ENCODE measurements at regions of chr2 and their contacts with region 1.

Region 1: GRCh38 chr2:193847140-193847539 is 1652.4 kb upstream of the TMEFF2 start:
- DNase-seq: no peak
- H3K4me3 ChIP-seq: no peak overlapping the region
- H3K27ac ChIP-seq: no peak overlapping the region
- H3K4me1 ChIP-seq: no peaks in the 10 kb centered on the region
- H3K27me3 ChIP-seq: no peaks in the 10 kb centered on the region
- CTCF ChIP-seq: no peak
- POLR2A ChIP-seq: no peak

Region 2: GRCh38 chr2:194867328-194867727 is 1020.2 kb after region 1 on chr2:
- intact Hi-C with region 1: no loop called
- DNase-seq: no peak
- H3K4me3 ChIP-seq: no peak overlapping the region
- H3K27ac ChIP-seq: no peak overlapping the region
- H3K4me1 ChIP-seq: no peaks in the 10 kb centered on the region
- H3K27me3 ChIP-seq: no peaks in the 10 kb centered on the region
- CTCF ChIP-seq: peak; percentile 12 to 20 (median 18)
- POLR2A ChIP-seq: no peak

Region 3: GRCh38 chr2:195168369-195168768 is 1321.2 kb after region 1 on chr2:
- intact Hi-C with region 1: loop called (anchors 10 kb)
- DNase-seq: no peak
- H3K4me3 ChIP-seq: no peak overlapping the region
- H3K27ac ChIP-seq: no peak overlapping the region
- H3K4me1 ChIP-seq: no peaks in the 10 kb centered on the region
- H3K27me3 ChIP-seq: no peaks in the 10 kb centered on the region
- CTCF ChIP-seq: no peak
- POLR2A ChIP-seq: no peak